Activated B cell treated with CpG ODN at 0.5 μM for 24 hours (primary cell): ENCODE measurements at regions of chr17 and their contacts with region 1.

Region 1: GRCh38 chr17:409848-410545 is 57.4 kb upstream of the RPH3AL start:
- DNase-seq: peak; percentile 99
- ATAC-seq: peak; percentile 84
- H3K4me3 Mint-ChIP-seq: peak overlapping the region; percentile 88
- H3K27ac Mint-ChIP-seq: peak overlapping the region; percentile 91
- H3K4me1 Mint-ChIP-seq: peaks cover 47% of the 10 kb centered on the region
- H3K27me3 Mint-ChIP-seq: no peaks in the 10 kb centered on the region
- CTCF ChIP-seq: no peak

Region 2: DNA sequence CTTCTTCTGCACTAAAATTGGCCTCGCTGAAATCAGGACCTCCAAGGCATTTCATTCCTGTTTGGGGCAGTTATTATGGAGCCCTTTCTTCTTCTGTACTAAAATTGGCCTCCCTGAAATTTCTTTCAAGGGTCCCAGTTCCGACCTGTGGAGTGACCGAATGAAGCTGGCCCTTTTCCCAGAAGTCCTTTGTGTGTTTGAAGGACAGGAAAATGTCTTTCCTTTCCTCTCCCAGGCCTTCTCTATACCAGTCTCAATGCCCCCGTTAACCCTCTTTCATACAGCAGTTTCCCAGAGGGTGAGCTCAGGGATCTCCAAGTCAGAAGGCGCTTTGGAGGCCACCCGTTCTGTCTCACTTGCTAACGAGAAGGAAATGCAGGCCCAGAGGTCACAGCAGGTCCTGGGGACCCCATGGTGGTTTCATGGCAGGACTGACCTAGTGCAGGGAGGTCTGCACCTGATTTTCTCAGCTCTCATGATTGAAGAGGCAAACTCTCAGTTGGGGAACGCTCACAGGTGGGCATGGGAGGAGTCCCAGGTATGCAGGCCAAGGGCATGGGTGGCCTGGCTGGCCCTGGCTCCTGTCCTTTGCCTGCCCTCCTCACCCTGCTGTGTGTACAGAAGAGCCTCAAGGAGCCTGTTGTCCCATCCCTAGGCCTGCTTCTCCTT is 191.4 kb before region 1 on chr17:
- CTCF ChIA-PET with region 1: no interaction called
- POLR2A ChIA-PET with region 1: no interaction called
- intact Hi-C with region 1: loop called (anchors 1 kb)
- DNase-seq: no peak
- ATAC-seq: no peak
- H3K4me3 Mint-ChIP-seq: no peak overlapping the region
- H3K27ac Mint-ChIP-seq: no peak overlapping the region
- H3K4me1 Mint-ChIP-seq: peaks cover 8% of the 10 kb centered on the region
- H3K27me3 Mint-ChIP-seq: no peaks in the 10 kb centered on the region
- CTCF ChIP-seq: no peak

Region 3: GRCh38 chr17:385926-386876 is 23.8 kb before region 1 on chr17:
- CTCF ChIA-PET with region 1: no interaction called
- POLR2A ChIA-PET with region 1: no interaction called
- intact Hi-C with region 1: no loop called
- DNase-seq: peak; percentile 74
- ATAC-seq: peak; percentile 85
- H3K4me3 Mint-ChIP-seq: peak overlapping the region; percentile 82
- H3K27ac Mint-ChIP-seq: no peak overlapping the region
- H3K4me1 Mint-ChIP-seq: peaks cover 18% of the 10 kb centered on the region
- H3K27me3 Mint-ChIP-seq: peaks cover 21% of the 10 kb centered on the region
- CTCF ChIP-seq: no peak

Region 4: DNA sequence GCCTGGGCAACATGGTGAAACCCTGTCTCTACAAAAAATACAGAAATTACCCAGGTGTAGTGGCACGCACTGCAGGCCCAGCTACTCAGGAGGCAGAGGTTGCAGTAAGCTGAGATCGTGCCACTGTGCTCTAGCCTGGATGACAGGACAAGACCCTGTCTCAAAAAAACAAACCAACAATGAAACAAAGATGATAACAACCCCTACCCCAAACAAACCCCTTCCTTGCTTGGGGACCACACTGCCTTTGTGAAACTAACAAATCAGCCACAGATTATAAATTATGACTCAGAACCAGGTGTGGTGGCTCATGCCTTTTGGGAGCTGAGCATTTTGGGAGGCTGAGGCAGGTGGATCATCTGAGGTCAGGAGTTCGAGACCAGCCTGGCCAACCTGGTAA is 17.9 kb after region 1 on chr17:
- CTCF ChIA-PET with region 1: no interaction called
- POLR2A ChIA-PET with region 1: no interaction called
- intact Hi-C with region 1: no loop called
- DNase-seq: no peak
- ATAC-seq: no peak
- H3K4me3 Mint-ChIP-seq: no peak overlapping the region
- H3K27ac Mint-ChIP-seq: no peak overlapping the region
- H3K4me1 Mint-ChIP-seq: no peaks in the 10 kb centered on the region
- H3K27me3 Mint-ChIP-seq: peaks cover 5% of the 10 kb centered on the region
- CTCF ChIP-seq: no peak